ENCODE measurements at regions of chr5 and their contacts with region 1.

Region 1: GRCh38 chr5:34898258-34898895 is 16.9 kb downstream of the RAD1 start:
- DNase-seq: peak; percentile 69 to 87 (median 73)
- ATAC-seq: peak; percentile 90
- H3K4me3 ChIP-seq: no peak overlapping the region
- H3K27ac ChIP-seq: no peak overlapping the region
- H3K4me1 ChIP-seq: peaks cover 6 to 18% of the 10 kb centered on the region in 2 experiments
- H3K27me3 ChIP-seq: no peaks in the 10 kb centered on the region
- CTCF ChIP-seq: peak; percentile 82 to 96 (median 93)
- EP300 ChIP-seq: no peak
- POLR2A ChIP-seq: no peak
- RAD21 ChIP-seq: peak; percentile 97 to 98

Region 2: GRCh38 chr5:34452170-34452830 is 446.1 kb before region 1 on chr5:
- CTCF ChIA-PET with region 1: no interaction called
- POLR2A ChIA-PET with region 1: no interaction called
- in situ Hi-C with region 1: no loop called
- intact Hi-C with region 1: no loop called
- DNase-seq: peak in 2 of 4 experiments; percentile 32 to 43
- ATAC-seq: peak; percentile 79
- H3K4me3 ChIP-seq: no peak overlapping the region
- H3K27ac ChIP-seq: no peak overlapping the region
- H3K4me1 ChIP-seq: no peaks in the 10 kb centered on the region
- H3K27me3 ChIP-seq: peaks cover 12 to 36% of the 10 kb centered on the region in 2 experiments; a peak in 4 of 5 replicates
- CTCF ChIP-seq: peak; percentile 55 to 75 (median 59)
- EP300 ChIP-seq: no peak
- POLR2A ChIP-seq: no peak
- RAD21 ChIP-seq: peak; percentile 51 to 69

Region 3: GRCh38 chr5:34474573-34475021 is 423.8 kb before region 1 on chr5:
- CTCF ChIA-PET with region 1: interaction called, 15 read pairs
- POLR2A ChIA-PET with region 1: no interaction called
- in situ Hi-C with region 1: no loop called
- intact Hi-C with region 1: loop called (anchors 1 kb)
- DNase-seq: peak; percentile 68 to 72 (median 70)
- ATAC-seq: peak; percentile 93
- H3K4me3 ChIP-seq: no peak overlapping the region
- H3K27ac ChIP-seq: no peak overlapping the region
- H3K4me1 ChIP-seq: no peaks in the 10 kb centered on the region
- H3K27me3 ChIP-seq: peaks cover 14 to 28% of the 10 kb centered on the region in 2 experiments; a peak in 4 of 5 replicates
- CTCF ChIP-seq: peak; percentile 84 to 95 (median 87)
- EP300 ChIP-seq: no peak
- POLR2A ChIP-seq: no peak
- RAD21 ChIP-seq: peak; percentile 91 to 94

Region 4: GRCh38 chr5:34522599-34523386 is 375.6 kb before region 1 on chr5:
- CTCF ChIA-PET with region 1: interaction called, 38 read pairs
- POLR2A ChIA-PET with region 1: interaction called, 5 read pairs
- in situ Hi-C with region 1: loop called (anchors 5 kb)
- intact Hi-C with region 1: loop called (anchors 1 kb)
- DNase-seq: peak; percentile 77 to 88 (median 79)
- ATAC-seq: peak; percentile 88
- H3K4me3 ChIP-seq: no peak overlapping the region
- H3K27ac ChIP-seq: no peak overlapping the region; the same call in 2 of the 3 replicates
- H3K4me1 ChIP-seq: peaks cover 14 to 35% of the 10 kb centered on the region in 2 experiments; a peak in 3 of 5 replicates
- H3K27me3 ChIP-seq: no peaks in the 10 kb centered on the region
- CTCF ChIP-seq: peak; percentile 80 to 92 (median 84)
- EP300 ChIP-seq: no peak
- POLR2A ChIP-seq: no peak
- RAD21 ChIP-seq: peak; percentile 92 to 95

Region 5: GRCh38 chr5:34656001-34656699 is 242.2 kb before region 1 on chr5 and contains the start of gene RAI14:
- CTCF ChIA-PET with region 1: no interaction called
- POLR2A ChIA-PET with region 1: interaction called, 3 read pairs
- in situ Hi-C with region 1: no loop called
- intact Hi-C with region 1: loop called (anchors 2 kb)
- DNase-seq: peak; percentile 86 to 98 (median 94)
- ATAC-seq: peak; percentile 87
- H3K4me3 ChIP-seq: peak within 1 kb of the TSS; percentile 75
- H3K27ac ChIP-seq: peak within 1 kb of the TSS; percentile 74
- H3K4me1 ChIP-seq: peaks cover 21% of the 10 kb centered on the region in 2 experiments; a peak in 4 of 5 replicates
- H3K27me3 ChIP-seq: no peaks in the 10 kb centered on the region
- CTCF ChIP-seq: peak in 1 of 3 experiments; percentile 26; a peak in 2 of 6 replicates
- EP300 ChIP-seq: no peak
- POLR2A ChIP-seq: peak; percentile 64
- RAD21 ChIP-seq: peak; percentile 58 to 61
- polyA plus RNA-seq, gene RAI14: 11.3 to 12.6 TPM

Region 6: DNA sequence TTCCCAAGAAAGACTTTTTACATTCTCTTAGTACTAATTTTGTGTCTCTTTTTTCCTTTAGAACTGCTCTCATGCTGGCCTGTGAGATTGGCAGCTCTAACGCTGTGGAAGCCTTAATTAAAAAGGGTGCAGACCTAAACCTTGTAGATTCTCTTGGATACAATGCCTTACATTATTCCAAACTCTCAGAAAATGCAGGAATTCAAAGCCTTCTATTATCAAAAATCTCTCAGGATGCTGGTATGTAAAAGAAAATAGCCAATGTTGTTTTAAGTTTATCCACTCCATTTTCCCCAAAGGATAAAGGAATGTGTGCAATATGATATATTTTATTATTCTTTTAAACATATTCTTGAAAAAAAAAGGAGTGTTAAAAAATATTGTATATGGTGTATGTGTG is 86.7 kb before region 1 on chr5:
- CTCF ChIA-PET with region 1: no interaction called
- POLR2A ChIA-PET with region 1: no interaction called
- in situ Hi-C with region 1: no loop called
- intact Hi-C with region 1: loop called (anchors 5 kb)
- DNase-seq: no peak
- ATAC-seq: no peak
- H3K4me3 ChIP-seq: no peak overlapping the region
- H3K27ac ChIP-seq: no peak overlapping the region
- H3K4me1 ChIP-seq: peaks cover 0 to 2% of the 10 kb centered on the region in 2 experiments; a peak in 1 of 5 replicates
- H3K27me3 ChIP-seq: no peaks in the 10 kb centered on the region
- CTCF ChIP-seq: no peak
- EP300 ChIP-seq: no peak
- POLR2A ChIP-seq: no peak
- RAD21 ChIP-seq: no peak

Region 7: DNA sequence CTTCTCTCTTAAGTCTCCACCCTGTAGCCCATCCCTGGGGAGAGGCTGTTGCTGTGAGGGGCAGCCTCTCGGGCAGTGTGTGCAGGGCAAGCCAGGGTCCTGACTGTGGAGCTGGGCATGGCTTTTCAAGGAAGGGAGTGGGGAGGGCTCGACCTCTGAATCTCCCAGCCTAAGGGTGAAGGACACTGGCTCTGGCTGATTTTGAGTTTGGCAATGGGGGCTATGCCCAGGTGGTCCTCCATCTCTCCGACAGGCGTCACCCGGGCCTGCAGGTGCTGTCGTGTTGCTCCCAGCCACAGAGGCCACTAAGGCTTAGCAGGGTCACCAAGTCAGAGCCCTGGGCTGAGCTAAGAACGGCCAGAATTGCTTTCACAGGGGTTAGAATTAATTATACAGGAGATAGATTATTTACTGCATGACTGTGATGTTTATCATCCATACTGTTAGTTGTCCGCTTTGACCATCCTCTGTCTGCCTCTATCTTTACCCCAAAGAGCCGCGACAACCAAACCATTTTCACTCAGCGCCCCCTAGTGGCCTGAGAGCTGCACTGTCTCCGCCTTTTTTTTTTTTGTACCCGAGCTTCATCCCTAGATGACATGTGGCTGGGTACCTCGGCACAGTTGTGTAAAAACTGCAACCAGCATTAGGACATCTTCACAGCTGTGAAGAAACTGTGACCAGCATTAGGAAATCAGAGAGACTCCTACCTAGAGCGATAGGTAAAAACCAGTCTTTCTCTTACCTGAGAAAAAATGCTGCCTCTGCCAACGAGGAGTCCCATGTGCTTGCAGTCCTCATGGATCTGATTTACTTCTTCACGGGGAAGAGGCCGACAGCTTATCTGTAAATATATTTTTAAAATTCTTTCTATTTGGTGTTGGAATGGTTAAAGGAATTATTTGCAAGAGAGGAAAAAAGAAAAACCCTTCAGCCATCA is 104.9 kb after region 1 on chr5:
- CTCF ChIA-PET with region 1: no interaction called
- POLR2A ChIA-PET with region 1: interaction called, 3 read pairs
- in situ Hi-C with region 1: no loop called
- intact Hi-C with region 1: loop called (anchors 5 kb)
- DNase-seq: peak; percentile 78 to 82 (median 82)
- ATAC-seq: peak; percentile 96
- H3K4me3 ChIP-seq: no peak overlapping the region
- H3K27ac ChIP-seq: no peak overlapping the region
- H3K4me1 ChIP-seq: no peaks in the 10 kb centered on the region; a peak in 1 of 5 replicates
- H3K27me3 ChIP-seq: peaks cover 5 to 16% of the 10 kb centered on the region in 2 experiments; a peak in 3 of 5 replicates
- CTCF ChIP-seq: peak; percentile 85 to 96 (median 96)
- EP300 ChIP-seq: no peak
- POLR2A ChIP-seq: no peak
- RAD21 ChIP-seq: peak; percentile 66 to 77

Measured in K562 (cell line).